Panc1 (cell line): ENCODE measurements at regions of chr2 and their contacts with region 1.

Region 1: GRCh38 chr2:241702132-241703031 is 543 bp downstream of the ING5 start:
- DNase-seq: no peak
- ATAC-seq: peak; percentile 86
- H3K4me3 ChIP-seq: peak overlapping the region; percentile 71 to 77
- H3K27ac ChIP-seq: peak overlapping the region; percentile 71
- H3K4me1 ChIP-seq: peaks cover 10% of the 10 kb centered on the region
- H3K27me3 ChIP-seq: no peaks in the 10 kb centered on the region
- CTCF ChIP-seq: no peak; the same call in 1 of the 2 replicates

Region 2: DNA sequence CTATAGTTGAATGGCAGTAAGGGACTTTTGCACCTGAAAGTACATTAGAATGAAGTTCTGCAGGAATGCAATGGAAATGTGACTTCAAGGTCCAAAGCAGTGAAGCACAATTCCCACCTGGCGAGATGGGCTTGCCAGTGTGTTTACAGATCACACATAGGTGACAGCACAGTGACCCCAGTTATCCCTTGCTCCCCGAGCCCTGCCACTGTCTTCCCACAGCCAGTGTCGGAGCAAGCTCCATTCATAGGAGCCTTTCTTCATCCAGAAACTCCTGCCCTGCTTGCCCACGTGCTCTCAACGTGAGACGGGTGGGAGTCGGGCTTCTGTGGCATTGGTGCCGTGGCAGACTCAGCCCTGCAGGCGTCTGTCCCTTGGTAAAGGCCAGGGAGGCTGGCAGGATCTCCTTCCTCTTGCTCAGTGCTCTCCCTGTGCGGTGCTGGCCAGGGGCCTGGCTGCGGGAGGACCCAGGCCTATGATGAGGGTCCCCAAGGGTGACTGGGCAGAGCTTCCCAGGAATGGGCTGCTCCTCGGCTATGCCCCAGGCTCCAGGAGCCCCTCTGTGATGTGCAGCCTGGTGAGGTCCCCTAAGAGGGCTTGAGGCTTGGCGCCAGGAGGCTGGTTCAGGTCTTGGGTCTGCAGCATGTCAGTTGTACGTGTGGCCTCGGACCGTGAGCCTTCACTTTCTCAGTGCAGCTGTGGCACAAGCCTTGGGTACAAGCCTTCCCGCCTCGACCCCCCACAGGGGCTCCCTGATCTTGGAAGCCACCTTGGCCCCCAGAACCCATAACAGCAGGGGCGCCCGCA is 663.8 kb before region 1 on chr2:
- CTCF ChIA-PET with region 1: no interaction called
- POLR2A ChIA-PET with region 1: interaction called, 20 read pairs
- in situ Hi-C with region 1: no loop called
- intact Hi-C with region 1: no loop called
- DNase-seq: no peak
- ATAC-seq: no peak
- H3K4me3 ChIP-seq: no peak overlapping the region
- H3K27ac ChIP-seq: no peak overlapping the region
- H3K4me1 ChIP-seq: no peaks in the 10 kb centered on the region; the same call in 1 of the 2 replicates
- H3K27me3 ChIP-seq: no peaks in the 10 kb centered on the region
- CTCF ChIP-seq: no peak